Head of caudate nucleus (tissue), 42 donors: ENCODE measurements at regions of chr3 and their contacts with region 1.

Region 1: GRCh38 chr3:58568572-58569286 is 8.5 kb downstream of the FAM107A start:
- DNase-seq: peak; percentile 38 to 95 (median 88)

Region 2: DNA sequence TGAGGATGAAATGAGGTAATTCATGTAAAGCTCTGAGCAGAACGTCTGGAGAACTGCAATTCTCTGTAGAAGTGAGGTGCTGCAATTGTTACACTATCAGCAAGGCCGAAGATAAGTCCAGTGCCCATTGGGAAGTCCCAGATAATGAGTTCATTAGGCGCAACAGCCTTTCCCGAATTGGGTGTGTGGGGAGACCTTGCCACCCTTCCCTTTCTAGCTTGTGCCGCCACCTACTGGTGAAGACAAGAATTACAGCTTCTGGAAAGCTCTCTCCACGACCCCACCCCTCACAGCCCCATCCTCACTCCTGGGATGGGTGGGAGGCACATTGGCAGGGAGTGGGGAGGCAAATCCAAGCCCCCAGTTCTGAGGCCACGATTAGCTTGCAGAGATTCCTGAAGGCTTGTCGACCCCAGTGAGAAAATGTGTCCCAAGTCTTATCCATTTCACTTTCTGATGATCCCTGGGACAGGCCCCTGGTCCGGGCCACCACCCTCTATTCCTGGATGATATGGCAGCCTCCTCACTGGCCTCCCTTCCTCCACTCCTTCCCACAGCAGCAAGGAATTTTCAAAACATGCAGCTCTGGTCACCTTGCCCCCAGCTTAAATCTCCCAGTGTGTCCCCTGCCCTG is 61.5 kb after region 1 on chr3:
- intact Hi-C with region 1: loop called (anchors 2 kb)
- DNase-seq: peak; percentile 32 to 92 (median 76)